Activated CD4-positive, alpha-beta memory T cell treated with anti-CD3 and anti-CD28 coated beads, Interleukin-2, amount 10 ng/mL, durations not matched to agents 7 days and 5 days (primary cell): ENCODE measurements at regions of chr16 and their contacts with region 1.

Region 1: GRCh38 chr16:30534368-30535105 is at the start of gene ZNF747:
- DNase-seq: peak; percentile 93
- H3K4me3 Mint-ChIP-seq: peak within 1 kb of the TSS; percentile 87
- H3K27ac Mint-ChIP-seq: peak within 1 kb of the TSS; percentile 97
- H3K4me1 Mint-ChIP-seq: peaks cover 45% of the 10 kb centered on the region
- H3K27me3 Mint-ChIP-seq: no peaks in the 10 kb centered on the region
- total RNA-seq, gene ZNF747: 10.6 to 10.7 TPM

Region 2: GRCh38 chr16:30458561-30459394 is 75.8 kb before region 1 on chr16:
- CTCF ChIA-PET with region 1: interaction called, 10 read pairs
- POLR2A ChIA-PET with region 1: interaction called, 20 read pairs
- DNase-seq: peak; percentile 95
- H3K4me3 Mint-ChIP-seq: peak overlapping the region; percentile 67
- H3K27ac Mint-ChIP-seq: peak overlapping the region; percentile 98
- H3K4me1 Mint-ChIP-seq: peaks cover 74% of the 10 kb centered on the region
- H3K27me3 Mint-ChIP-seq: peaks cover 2% of the 10 kb centered on the region

Region 3: DNA sequence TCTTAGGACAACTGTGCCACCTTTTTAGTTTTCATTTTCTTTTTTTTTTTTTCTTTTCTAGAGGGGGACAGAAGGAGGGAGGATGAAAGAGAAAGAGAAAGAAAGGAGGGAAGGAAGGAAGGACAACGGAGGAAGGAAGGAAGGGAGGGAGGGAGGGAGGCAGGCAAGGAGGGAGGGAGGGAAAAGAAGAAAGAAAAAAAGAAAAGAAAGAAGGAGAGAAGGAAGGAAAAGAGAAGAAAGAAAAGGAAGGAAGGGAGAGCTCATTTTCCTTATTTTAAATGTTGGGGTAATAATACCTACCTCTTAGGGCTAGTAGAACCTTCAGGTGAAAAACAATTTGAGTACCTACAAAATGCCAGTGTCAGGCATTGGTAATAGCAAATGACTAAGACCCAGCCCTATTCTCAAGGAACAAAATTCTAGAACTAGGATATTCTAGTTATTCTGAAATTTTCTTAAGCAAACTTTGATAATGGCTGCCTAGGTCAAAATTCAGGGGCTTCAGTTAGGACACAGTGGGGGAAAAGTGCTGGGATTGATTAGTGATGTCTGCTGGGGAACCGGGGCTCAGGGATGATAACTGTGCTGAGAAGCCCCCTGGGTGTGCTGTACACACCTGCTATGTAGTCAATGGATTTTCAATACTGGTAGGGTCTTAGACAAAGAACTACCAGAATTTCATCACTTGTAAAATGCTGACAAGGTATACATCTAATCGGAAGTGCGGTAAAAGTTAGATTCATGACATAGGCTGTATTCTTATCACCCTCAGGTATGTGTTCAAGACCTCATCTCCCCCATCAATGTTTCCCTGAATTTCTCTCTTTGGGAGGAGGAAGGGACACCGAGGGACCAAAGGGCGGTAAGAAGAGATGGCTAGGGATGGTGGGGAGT is 30.9 kb before region 1 on chr16:
- CTCF ChIA-PET with region 1: no interaction called
- POLR2A ChIA-PET with region 1: no interaction called
- DNase-seq: no peak
- H3K4me3 Mint-ChIP-seq: no peak overlapping the region
- H3K27ac Mint-ChIP-seq: peak overlapping the region; percentile 40
- H3K4me1 Mint-ChIP-seq: peaks cover 12% of the 10 kb centered on the region
- H3K27me3 Mint-ChIP-seq: no peaks in the 10 kb centered on the region

Region 4: DNA sequence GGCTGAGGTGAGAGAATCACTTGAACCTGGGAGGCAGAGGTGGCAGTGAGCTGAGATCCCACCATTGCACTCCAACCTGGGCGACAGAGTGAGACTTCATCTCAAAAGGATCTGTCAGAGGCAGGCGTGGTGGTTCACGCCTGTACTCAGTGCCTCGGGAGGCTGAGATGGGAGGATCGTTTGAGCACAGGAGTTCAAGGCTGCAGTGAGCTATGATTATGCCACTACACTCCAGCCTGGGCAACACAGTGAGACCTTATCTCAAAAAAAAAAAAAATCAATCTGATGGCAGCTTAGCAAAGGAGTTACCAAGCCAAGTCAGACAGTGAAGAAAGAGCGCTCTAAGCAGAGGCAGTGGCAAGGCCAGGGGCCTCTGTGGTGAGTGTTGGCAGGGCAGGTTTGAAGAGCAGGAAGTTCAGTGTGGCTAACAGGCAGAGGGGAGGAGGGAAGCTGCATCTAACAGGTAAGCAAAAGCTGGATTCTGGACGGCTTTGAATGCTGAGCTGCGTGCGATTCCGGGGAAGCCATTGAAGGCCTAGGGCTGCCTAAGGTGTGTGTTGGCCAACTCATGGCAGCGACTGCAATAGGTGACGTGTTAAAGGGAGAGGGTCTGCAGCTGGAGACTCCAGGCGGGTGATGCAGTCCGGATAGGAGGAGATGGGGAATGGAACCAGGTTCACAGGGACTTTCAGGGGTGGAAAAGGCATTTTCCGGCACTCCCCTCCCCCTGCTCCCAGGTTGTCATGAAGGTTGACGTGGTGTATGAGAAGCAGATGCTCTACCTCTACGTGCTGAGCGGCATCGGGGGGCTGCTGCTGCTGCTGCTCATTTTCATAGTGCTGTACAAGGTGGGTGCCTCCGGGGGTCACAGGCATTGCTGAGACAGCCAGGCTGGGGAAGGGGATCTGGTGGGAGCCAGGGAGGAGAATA is 15.2 kb before region 1 on chr16:
- CTCF ChIA-PET with region 1: no interaction called
- POLR2A ChIA-PET with region 1: interaction called, 15 read pairs
- DNase-seq: no peak
- H3K4me3 Mint-ChIP-seq: no peak overlapping the region
- H3K27ac Mint-ChIP-seq: no peak overlapping the region
- H3K4me1 Mint-ChIP-seq: peaks cover 21% of the 10 kb centered on the region
- H3K27me3 Mint-ChIP-seq: no peaks in the 10 kb centered on the region

Region 5: GRCh38 chr16:30557957-30558788 is 23.6 kb after region 1 on chr16 and contains the start of gene ZNF764:
- CTCF ChIA-PET with region 1: interaction called, 90 read pairs
- POLR2A ChIA-PET with region 1: interaction called, 189 read pairs
- DNase-seq: peak; percentile 99
- H3K4me3 Mint-ChIP-seq: peak within 1 kb of the TSS; percentile 86
- H3K27ac Mint-ChIP-seq: peak within 1 kb of the TSS; percentile 90
- H3K4me1 Mint-ChIP-seq: peaks cover 51% of the 10 kb centered on the region
- H3K27me3 Mint-ChIP-seq: no peaks in the 10 kb centered on the region
- total RNA-seq, gene ZNF764: 16.0 to 16.8 TPM

Region 6: GRCh38 chr16:30585400-30586189 is 51.1 kb after region 1 on chr16 and contains the start of gene ZNF785:
- CTCF ChIA-PET with region 1: interaction called, 19 read pairs
- POLR2A ChIA-PET with region 1: interaction called, 58 read pairs
- DNase-seq: peak; percentile 96
- H3K4me3 Mint-ChIP-seq: peak within 1 kb of the TSS; percentile 77
- H3K27ac Mint-ChIP-seq: peak within 1 kb of the TSS; percentile 61
- H3K4me1 Mint-ChIP-seq: peaks cover 36% of the 10 kb centered on the region
- H3K27me3 Mint-ChIP-seq: no peaks in the 10 kb centered on the region
- total RNA-seq, gene ZNF785: 12.9 to 13.3 TPM

Region 7: DNA sequence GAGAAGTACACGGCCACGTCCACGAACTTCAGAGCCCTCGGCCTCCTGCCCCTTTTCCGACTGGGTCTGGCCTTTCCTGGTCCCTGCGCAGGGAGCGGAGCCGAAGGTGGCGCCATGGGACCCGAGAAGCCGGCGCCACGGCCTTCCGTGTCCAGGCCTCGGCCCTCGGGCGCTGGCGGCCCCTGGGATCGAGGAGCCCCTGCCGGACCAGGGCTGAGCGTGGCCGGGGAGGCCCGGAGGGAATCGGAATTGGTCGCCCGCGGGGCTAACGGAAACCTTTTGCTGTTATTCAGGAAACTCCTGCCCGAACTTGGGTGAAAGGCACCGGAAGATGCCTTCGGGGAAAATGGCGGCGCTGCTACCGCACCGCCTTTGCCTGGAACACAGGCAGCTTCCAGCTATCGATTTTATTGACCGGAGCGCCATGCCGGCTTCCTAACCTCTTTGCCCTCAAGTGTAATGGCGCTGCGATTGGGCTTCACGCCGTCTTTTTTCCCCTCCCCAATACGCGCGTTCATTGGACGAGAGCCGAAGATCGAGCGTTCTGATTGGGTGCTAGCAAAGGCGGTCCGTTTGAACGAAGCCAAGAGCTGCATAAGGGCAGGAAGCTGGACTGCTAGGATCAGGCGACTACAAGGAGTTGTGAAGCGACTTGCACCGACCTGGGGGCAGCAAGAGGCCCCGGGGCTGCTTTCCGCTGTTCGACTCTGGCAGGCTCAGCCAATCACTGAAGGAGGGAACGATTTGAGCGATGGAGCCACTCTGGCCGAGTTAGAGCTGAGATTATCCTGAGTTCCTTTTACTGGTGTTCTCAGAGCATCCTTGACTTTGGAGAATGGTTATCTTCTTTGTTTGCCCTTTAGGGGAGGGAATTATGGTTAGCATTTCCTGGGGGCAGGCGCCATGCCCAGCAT is 75.6 kb after region 1 on chr16 and contains the start of gene ZNF689:
- CTCF ChIA-PET with region 1: interaction called, 20 read pairs
- POLR2A ChIA-PET with region 1: interaction called, 22 read pairs
- DNase-seq: peak; percentile 96
- H3K4me3 Mint-ChIP-seq: peak within 1 kb of the TSS; percentile 83
- H3K27ac Mint-ChIP-seq: peak within 1 kb of the TSS; percentile 90
- H3K4me1 Mint-ChIP-seq: peaks cover 29% of the 10 kb centered on the region
- H3K27me3 Mint-ChIP-seq: no peaks in the 10 kb centered on the region
- total RNA-seq, gene ZNF689: 9.9 to 11.7 TPM

Region 8: GRCh38 chr16:30628627-30629540 is 94.3 kb after region 1 on chr16:
- CTCF ChIA-PET with region 1: interaction called, 16 read pairs
- POLR2A ChIA-PET with region 1: interaction called, 9 read pairs
- DNase-seq: peak; percentile 90
- H3K4me3 Mint-ChIP-seq: peak overlapping the region; percentile 63
- H3K27ac Mint-ChIP-seq: peak overlapping the region; percentile 53
- H3K4me1 Mint-ChIP-seq: peaks cover 16% of the 10 kb centered on the region
- H3K27me3 Mint-ChIP-seq: peaks cover 2% of the 10 kb centered on the region